Activated CD4-positive, alpha-beta memory T cell treated with anti-CD3 and anti-CD28 coated beads for 36 hours (primary cell): ENCODE measurements at regions of chr19 and their contacts with region 1.

Region 1: DNA sequence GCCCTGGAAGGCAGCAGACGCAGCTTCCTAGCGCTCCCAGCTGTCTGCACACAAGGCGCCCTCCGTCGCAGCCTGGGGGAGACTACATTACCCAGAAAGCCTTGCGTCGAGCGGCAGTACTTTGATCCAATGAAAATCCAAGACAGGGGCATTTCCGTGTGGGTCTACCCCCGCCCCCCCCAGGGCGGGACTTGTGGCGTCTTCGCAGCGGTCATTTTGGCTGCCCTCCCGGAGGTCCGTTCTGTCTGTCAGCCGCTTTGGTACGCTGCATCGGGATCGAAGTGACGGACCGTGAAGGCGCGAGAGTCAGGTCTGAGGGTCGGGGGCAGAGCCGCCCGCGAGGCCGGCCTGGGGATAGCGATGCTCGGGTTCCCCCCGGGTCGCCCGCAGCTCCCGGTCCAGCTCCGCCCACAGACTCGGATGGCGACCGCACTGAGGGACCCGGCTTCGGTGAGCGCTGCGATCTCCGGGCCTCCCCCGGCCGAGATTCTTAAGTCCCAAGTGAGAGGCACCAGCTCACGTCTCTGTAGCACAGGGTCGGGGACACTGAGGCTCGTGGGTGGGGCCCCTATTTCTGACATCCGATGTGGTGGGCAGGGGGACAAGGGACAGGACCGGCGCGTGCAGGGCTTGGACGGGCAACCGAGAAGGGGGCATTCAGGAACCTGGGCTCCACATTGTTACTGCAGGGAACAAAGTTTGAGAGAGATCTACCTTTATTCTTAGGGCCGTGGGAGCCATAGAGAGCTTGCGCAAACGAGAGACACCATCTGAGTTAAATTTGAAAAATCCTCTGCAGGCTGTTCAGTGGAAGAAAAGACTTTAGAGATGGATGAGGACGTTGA is at the start of gene ZNF211:
- DNase-seq: peak; percentile 92
- H3K4me3 Mint-ChIP-seq: peak within 1 kb of the TSS; percentile 84
- H3K27ac Mint-ChIP-seq: peak within 1 kb of the TSS; percentile 67
- H3K4me1 Mint-ChIP-seq: peaks cover 20% of the 10 kb centered on the region
- H3K27me3 Mint-ChIP-seq: no peaks in the 10 kb centered on the region
- total RNA-seq, gene ZNF211: 8.2 to 8.3 TPM

Region 2: GRCh38 chr19:57599761-57600383 is 33.3 kb before region 1 on chr19 and contains the start of gene ZNF530:
- CTCF ChIA-PET with region 1: no interaction called
- POLR2A ChIA-PET with region 1: interaction called, 3 read pairs
- intact Hi-C with region 1: loop called (anchors 1 kb)
- DNase-seq: peak; percentile 93
- H3K4me3 Mint-ChIP-seq: peak within 1 kb of the TSS; percentile 81
- H3K27ac Mint-ChIP-seq: no peak within 1 kb of the TSS
- H3K4me1 Mint-ChIP-seq: peaks cover 21% of the 10 kb centered on the region
- H3K27me3 Mint-ChIP-seq: no peaks in the 10 kb centered on the region
- total RNA-seq, gene ZNF530: 3.7 to 5.6 TPM

Region 3: DNA sequence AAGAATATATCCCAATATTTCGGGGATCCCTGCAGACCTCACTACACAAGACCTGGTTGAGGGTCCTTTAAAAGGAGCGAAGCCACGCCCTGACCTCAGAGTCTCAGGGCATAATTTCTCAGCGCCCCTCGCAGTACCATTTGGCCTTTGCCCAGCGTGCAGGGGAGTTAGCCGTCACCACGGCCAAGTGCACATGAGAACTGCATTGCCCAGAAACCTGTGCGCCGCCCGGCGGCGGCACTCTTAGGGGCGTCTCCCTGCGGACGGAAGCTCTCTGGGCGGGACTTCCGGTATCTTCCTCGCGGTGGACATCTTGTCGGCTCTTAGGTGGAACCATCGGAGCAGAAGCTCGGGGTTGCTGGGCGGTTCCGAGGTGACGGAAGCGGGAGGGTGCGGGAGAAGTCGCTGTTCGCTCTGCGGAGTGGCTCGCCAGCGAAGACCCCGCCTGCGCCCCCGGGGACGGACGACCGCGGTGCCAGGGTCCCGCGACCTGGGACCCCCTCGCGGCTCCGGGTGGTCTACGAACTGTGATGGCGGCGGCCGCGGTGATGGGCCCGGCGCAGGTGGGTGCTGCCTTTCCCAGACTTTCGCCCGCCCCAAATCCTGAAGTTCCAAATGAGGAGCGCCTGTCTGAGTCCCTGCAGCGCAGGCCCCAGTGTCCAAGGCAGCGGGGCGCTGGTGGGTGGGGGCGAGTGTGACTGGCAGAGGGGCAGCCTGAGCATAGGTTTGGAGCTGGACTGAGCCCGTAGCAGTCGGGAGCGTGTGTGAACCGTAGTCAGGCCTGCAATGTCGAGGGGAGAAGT is 19.1 kb before region 1 on chr19 and contains the start of gene ZNF134:
- CTCF ChIA-PET with region 1: interaction called, 4 read pairs
- POLR2A ChIA-PET with region 1: interaction called, 6 read pairs
- intact Hi-C with region 1: loop called (anchors 1 kb)
- DNase-seq: peak; percentile 93
- H3K4me3 Mint-ChIP-seq: peak within 1 kb of the TSS; percentile 89
- H3K27ac Mint-ChIP-seq: peak within 1 kb of the TSS; percentile 67
- H3K4me1 Mint-ChIP-seq: peaks cover 19% of the 10 kb centered on the region
- H3K27me3 Mint-ChIP-seq: no peaks in the 10 kb centered on the region
- total RNA-seq, gene ZNF134: 6.7 to 8.0 TPM

Region 4: GRCh38 chr19:57682226-57682766 is 49.1 kb after region 1 on chr19:
- CTCF ChIA-PET with region 1: interaction called, 10 read pairs
- POLR2A ChIA-PET with region 1: interaction called, 3 read pairs
- intact Hi-C with region 1: loop called (anchors 5 kb)
- DNase-seq: no peak
- H3K4me3 Mint-ChIP-seq: peak overlapping the region; percentile 92
- H3K27ac Mint-ChIP-seq: peak overlapping the region; percentile 80
- H3K4me1 Mint-ChIP-seq: peaks cover 28% of the 10 kb centered on the region
- H3K27me3 Mint-ChIP-seq: no peaks in the 10 kb centered on the region

Region 5: GRCh38 chr19:57867868-57868492 is 234.8 kb after region 1 on chr19:
- CTCF ChIA-PET with region 1: no interaction called
- POLR2A ChIA-PET with region 1: no interaction called
- intact Hi-C with region 1: no loop called
- DNase-seq: no peak
- H3K4me3 Mint-ChIP-seq: no peak overlapping the region
- H3K27ac Mint-ChIP-seq: no peak overlapping the region
- H3K4me1 Mint-ChIP-seq: no peaks in the 10 kb centered on the region
- H3K27me3 Mint-ChIP-seq: no peaks in the 10 kb centered on the region